Activated CD4-positive, alpha-beta T cell treated with anti-CD3 and anti-CD28 coated beads for 36 hours (primary cell): ENCODE measurements at regions of chr2 and their contacts with region 1.

Region 1: GRCh38 chr2:196160101-196160500 is 11.3 kb downstream of the STK17B start:
- DNase-seq: peak; percentile 73
- ATAC-seq: peak; percentile 45
- H3K4me3 Mint-ChIP-seq: peak overlapping the region; percentile 56
- H3K27ac Mint-ChIP-seq: peak overlapping the region; percentile 90
- H3K4me1 Mint-ChIP-seq: peaks cover 76% of the 10 kb centered on the region
- H3K27me3 Mint-ChIP-seq: no peaks in the 10 kb centered on the region

Region 2: GRCh38 chr2:196143730-196144131 is 16.4 kb before region 1 on chr2:
- CTCF ChIA-PET with region 1: interaction called, 4 read pairs
- POLR2A ChIA-PET with region 1: interaction called, 5 read pairs
- intact Hi-C with region 1: loop called in 1 of 2 experiments (anchors 2 kb)
- DNase-seq: no peak
- ATAC-seq: peak; percentile 62
- H3K4me3 Mint-ChIP-seq: peak overlapping the region; percentile 39
- H3K27ac Mint-ChIP-seq: peak overlapping the region; percentile 87
- H3K4me1 Mint-ChIP-seq: peaks cover 68% of the 10 kb centered on the region
- H3K27me3 Mint-ChIP-seq: no peaks in the 10 kb centered on the region

Region 3: DNA sequence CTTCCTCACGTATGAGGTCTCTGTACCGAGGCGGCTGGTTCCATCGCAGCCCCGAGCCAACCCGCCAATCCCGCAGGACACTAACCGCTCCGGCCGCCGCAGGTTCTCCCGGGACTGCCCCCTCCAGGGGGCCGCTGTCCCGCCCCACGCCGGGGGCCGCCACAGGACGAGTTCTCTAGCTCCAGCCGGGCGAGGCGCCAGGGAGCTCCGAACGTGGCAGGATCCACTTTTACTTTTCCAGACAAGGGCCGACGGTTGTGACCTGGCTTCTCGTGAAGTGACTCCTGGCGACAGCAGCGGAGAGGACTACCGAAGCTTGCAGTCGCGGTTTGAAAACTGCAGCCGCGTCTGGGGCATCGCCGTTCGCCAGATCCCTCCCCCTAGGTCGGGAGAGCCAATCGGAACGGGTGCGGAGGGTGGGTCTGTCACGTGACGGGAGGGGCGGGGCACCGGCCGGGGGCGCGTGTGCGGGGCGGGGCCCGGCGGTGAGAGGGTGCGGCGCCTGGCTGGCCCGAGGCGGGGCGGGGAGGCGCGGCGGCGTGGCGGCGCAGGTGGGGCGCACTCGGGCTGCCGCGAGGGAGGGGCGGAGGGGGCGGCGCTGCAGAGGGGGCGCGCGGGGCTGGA is 11.3 kb after region 1 on chr2 and contains the start of gene STK17B:
- CTCF ChIA-PET with region 1: interaction called, 16 read pairs
- POLR2A ChIA-PET with region 1: interaction called, 5 read pairs
- intact Hi-C with region 1: loop called (anchors 1 kb)
- DNase-seq: peak; percentile 99
- ATAC-seq: peak; percentile 76
- H3K4me3 Mint-ChIP-seq: peak within 1 kb of the TSS; percentile 92
- H3K27ac Mint-ChIP-seq: peak within 1 kb of the TSS; percentile 98
- H3K4me1 Mint-ChIP-seq: peaks cover 38% of the 10 kb centered on the region
- H3K27me3 Mint-ChIP-seq: no peaks in the 10 kb centered on the region
- total RNA-seq, gene STK17B: 159 to 178 TPM

Region 4: GRCh38 chr2:196239622-196240587 is 79.8 kb after region 1 on chr2:
- CTCF ChIA-PET with region 1: interaction called, 3 read pairs
- POLR2A ChIA-PET with region 1: interaction called, 6 read pairs
- intact Hi-C with region 1: loop called (anchors 1 kb)
- DNase-seq: peak; percentile 91
- ATAC-seq: peak; percentile 58
- H3K4me3 Mint-ChIP-seq: peak overlapping the region; percentile 46
- H3K27ac Mint-ChIP-seq: peak overlapping the region; percentile 97
- H3K4me1 Mint-ChIP-seq: peaks cover 91% of the 10 kb centered on the region
- H3K27me3 Mint-ChIP-seq: no peaks in the 10 kb centered on the region

Region 5: DNA sequence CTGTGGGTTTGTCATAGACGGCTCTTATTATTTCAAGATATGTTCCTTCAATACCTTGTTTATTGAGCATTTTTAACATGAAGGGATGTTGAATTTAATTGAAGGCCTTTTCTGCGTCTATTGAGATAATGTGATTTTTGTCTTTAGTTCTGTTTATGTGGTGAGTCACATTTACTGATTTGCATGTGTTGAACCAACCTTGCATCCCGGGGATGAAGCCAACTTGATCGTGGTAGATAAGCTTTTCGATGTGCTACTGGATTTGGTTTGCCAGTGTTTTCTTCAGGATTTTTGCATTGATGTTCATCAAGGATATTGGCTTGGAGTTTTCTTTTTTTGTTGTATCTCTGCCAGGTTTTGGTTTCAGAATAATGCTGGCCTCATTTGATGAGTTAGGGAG is 578.9 kb after region 1 on chr2:
- CTCF ChIA-PET with region 1: no interaction called
- POLR2A ChIA-PET with region 1: no interaction called
- intact Hi-C with region 1: no loop called
- DNase-seq: no peak
- ATAC-seq: no peak
- H3K4me3 Mint-ChIP-seq: no peak overlapping the region
- H3K27ac Mint-ChIP-seq: no peak overlapping the region
- H3K4me1 Mint-ChIP-seq: no peaks in the 10 kb centered on the region
- H3K27me3 Mint-ChIP-seq: no peaks in the 10 kb centered on the region